CD14-positive monocyte (primary cell): ENCODE measurements at regions of chr5 and their contacts with region 1.

Region 1: DNA sequence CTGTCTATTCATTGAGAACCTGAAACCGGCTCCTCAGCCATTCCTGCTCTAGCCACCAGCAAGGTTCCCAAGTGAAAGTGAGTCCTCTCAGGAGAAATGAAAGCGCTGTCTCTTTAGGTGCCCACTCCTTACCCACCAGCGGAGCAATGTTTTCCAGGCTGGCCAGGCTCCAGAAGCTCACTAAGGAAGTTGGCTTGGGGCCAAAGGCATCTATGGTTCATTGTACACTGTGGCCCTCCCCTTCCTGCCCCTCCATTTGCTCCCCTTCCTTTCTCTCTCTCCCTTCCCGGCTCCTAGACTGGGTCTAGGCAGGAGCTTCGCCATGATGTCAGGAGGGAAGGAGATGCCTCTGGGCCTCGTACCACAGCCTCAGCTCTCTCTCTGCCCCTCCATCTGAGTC is 1.1 kb upstream of the GABRP start:
- DNase-seq: no peak
- H3K4me3 ChIP-seq: no peak overlapping the region
- H3K4me3 Mint-ChIP-seq: no peak overlapping the region
- H3K27ac ChIP-seq: no peak overlapping the region
- H3K27ac Mint-ChIP-seq: no peak overlapping the region
- H3K4me1 ChIP-seq: no peaks in the 10 kb centered on the region
- H3K4me1 Mint-ChIP-seq: no peaks in the 10 kb centered on the region
- H3K27me3 ChIP-seq: no peaks in the 10 kb centered on the region
- H3K27me3 Mint-ChIP-seq: peaks cover under 1 to 3% (median 2%) of the 10 kb centered on the region in 3 donors
- CTCF ChIP-seq: no peak

Region 2: GRCh38 chr5:170662966-170663365 is 119.5 kb before region 1 on chr5:
- intact Hi-C with region 1: no loop called
- DNase-seq: no peak
- H3K4me3 ChIP-seq: no peak overlapping the region
- H3K4me3 Mint-ChIP-seq: no peak overlapping the region
- H3K27ac ChIP-seq: no peak overlapping the region
- H3K27ac Mint-ChIP-seq: no peak overlapping the region
- H3K4me1 ChIP-seq: no peaks in the 10 kb centered on the region
- H3K4me1 Mint-ChIP-seq: no peaks in the 10 kb centered on the region
- H3K27me3 ChIP-seq: peaks cover 0 to 3% of the 10 kb centered on the region in 2 donors
- H3K27me3 Mint-ChIP-seq: peaks cover 16 to 27% (median 21%) of the 10 kb centered on the region in 3 donors
- CTCF ChIP-seq: no peak

Region 3: GRCh38 chr5:172216345-172216744 is 1433.9 kb after region 1 on chr5:
- intact Hi-C with region 1: loop called in 1 of 2 experiments (anchors 10 kb)
- DNase-seq: peak in 1 of 3 donors; percentile 17
- H3K4me3 ChIP-seq: no peak overlapping the region
- H3K4me3 Mint-ChIP-seq: no peak overlapping the region
- H3K27ac ChIP-seq: no peak overlapping the region
- H3K27ac Mint-ChIP-seq: peak overlapping the region in 1 of 7 donors; percentile 59
- H3K4me1 ChIP-seq: no peaks in the 10 kb centered on the region
- H3K4me1 Mint-ChIP-seq: peaks cover 2% of the 10 kb centered on the region
- H3K27me3 ChIP-seq: no peaks in the 10 kb centered on the region
- H3K27me3 Mint-ChIP-seq: no peaks in the 10 kb centered on the region
- CTCF ChIP-seq: no peak